Heart left ventricle (tissue), 16 donors: ENCODE measurements at regions of chr18 and their contacts with region 1.

Region 1: DNA sequence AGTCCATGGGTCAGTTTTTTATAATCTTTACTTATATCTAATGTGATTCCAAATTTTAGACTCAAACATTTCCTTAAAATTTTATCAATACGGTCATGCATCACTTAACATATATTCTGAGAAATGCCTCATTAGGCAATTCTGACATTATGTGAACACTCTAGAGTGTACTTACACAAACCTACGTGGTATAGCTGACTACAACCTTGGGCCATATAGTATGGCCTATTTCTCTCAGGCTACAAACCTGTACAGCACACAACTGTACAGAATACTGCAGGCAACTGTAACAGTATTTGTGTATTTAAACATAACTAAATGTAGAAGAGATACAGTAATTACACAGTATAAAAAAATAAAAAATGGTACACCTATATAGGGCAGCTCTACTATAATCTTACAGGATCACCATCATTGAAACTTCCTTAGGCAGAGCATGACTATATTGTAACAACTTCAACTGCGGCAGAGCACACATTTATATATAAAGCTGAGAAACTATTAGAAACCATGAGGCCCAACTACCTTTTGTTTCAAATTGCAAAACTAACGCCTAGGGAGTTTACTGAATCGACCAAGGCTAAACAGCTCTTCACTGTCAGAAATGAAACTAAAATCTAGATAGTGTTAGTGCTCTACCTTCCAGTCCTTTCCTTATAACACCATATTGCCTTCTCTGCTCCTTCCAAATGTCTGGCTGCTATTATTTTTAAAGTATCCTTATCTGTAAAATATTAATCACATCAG is 6.9 kb downstream of the YES1 start:
- DNase-seq: no peak
- ATAC-seq: no peak
- H3K4me3 ChIP-seq: peak overlapping the region in 3 of 12 donors; percentile 3 to 22 (median 4)
- H3K27ac ChIP-seq: peak overlapping the region in 2 of 12 donors; percentile 8 to 9
- H3K4me1 ChIP-seq: peaks cover 0 to 54% (median 30%) of the 10 kb centered on the region in 12 donors
- H3K27me3 ChIP-seq: peaks cover 0 to 35% (median 0%) of the 10 kb centered on the region in 9 donors
- CTCF ChIP-seq: no peak
- POLR2A ChIP-seq: no peak

Region 2: DNA sequence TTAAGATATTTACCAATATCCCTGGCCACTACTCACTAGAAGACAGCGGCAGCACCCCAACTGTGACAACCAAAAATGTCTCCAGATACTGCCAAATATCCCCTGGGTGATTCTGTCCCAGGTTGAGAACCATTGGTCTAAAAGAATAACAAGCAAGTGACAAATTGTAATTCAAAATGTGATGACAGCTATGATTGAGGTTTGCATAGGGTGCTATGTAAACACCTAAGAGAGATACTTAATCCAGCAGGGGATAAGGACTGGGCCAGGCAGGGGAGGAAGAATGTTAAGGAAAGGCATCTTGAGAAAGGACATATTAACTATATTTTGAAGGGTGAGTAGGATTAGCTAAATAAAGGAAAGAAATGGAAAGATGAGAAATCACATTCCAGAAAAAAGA is 54.7 kb before region 1 on chr18:
- intact Hi-C with region 1: loop called in 1 of 10 experiments (anchors 5 kb)
- DNase-seq: no peak
- ATAC-seq: no peak
- H3K4me3 ChIP-seq: no peak overlapping the region
- H3K27ac ChIP-seq: no peak overlapping the region
- H3K4me1 ChIP-seq: no peaks in the 10 kb centered on the region
- H3K27me3 ChIP-seq: no peaks in the 10 kb centered on the region
- CTCF ChIP-seq: no peak
- POLR2A ChIP-seq: no peak

Region 3: DNA sequence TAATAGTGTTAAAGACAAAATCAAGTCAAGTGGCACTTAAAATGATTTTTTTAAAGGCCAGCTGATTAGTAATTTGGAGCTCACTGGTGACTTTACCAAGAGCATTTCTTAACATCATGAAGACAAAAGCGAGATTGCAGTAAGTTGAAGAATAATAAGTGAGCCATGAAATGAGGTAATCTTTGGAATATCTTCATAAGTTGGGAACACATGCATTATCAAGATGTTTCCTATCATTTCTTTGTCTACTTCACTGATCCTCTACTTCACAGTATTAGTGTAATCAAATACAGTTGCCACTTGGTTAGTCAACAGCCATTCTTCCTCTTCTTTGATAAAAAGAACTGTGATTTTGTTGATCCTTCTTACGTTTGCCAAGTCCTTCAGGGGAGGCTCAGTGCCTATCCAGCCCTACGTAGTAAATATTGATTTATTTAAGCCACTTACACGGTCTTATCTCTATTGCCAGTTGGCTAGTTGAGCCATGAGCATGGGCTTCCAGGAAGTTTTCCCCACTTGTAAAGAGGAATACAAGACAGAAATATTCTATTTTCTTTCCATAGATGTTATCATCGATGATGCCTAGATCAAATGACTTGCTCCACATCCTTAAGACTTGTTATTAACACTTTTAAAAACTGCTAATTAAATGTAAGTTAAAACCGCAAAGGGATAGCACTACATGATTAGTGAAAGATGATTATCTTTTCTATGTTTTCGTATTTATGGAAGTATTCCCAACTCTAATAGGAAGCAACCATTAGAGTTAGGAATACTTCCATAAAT is 39.2 kb before region 1 on chr18:
- intact Hi-C with region 1: loop called in 1 of 10 experiments (anchors 5 kb)
- DNase-seq: no peak
- ATAC-seq: no peak
- H3K4me3 ChIP-seq: no peak overlapping the region
- H3K27ac ChIP-seq: no peak overlapping the region
- H3K4me1 ChIP-seq: peaks cover 0 to 12% (median 2%) of the 10 kb centered on the region in 12 donors
- H3K27me3 ChIP-seq: no peaks in the 10 kb centered on the region
- CTCF ChIP-seq: no peak
- POLR2A ChIP-seq: no peak

Region 4: GRCh38 chr18:1147730-1148129 is 342.5 kb after region 1 on chr18:
- intact Hi-C with region 1: no loop called
- DNase-seq: no peak
- ATAC-seq: no peak
- H3K4me3 ChIP-seq: no peak overlapping the region
- H3K27ac ChIP-seq: no peak overlapping the region
- H3K4me1 ChIP-seq: no peaks in the 10 kb centered on the region
- H3K27me3 ChIP-seq: no peaks in the 10 kb centered on the region
- CTCF ChIP-seq: no peak
- POLR2A ChIP-seq: no peak